Activated B cell treated with CpG ODN at 0.5 μM for 24 hours (primary cell): ENCODE measurements at regions of chr14 and their contacts with region 1.

Region 1: DNA sequence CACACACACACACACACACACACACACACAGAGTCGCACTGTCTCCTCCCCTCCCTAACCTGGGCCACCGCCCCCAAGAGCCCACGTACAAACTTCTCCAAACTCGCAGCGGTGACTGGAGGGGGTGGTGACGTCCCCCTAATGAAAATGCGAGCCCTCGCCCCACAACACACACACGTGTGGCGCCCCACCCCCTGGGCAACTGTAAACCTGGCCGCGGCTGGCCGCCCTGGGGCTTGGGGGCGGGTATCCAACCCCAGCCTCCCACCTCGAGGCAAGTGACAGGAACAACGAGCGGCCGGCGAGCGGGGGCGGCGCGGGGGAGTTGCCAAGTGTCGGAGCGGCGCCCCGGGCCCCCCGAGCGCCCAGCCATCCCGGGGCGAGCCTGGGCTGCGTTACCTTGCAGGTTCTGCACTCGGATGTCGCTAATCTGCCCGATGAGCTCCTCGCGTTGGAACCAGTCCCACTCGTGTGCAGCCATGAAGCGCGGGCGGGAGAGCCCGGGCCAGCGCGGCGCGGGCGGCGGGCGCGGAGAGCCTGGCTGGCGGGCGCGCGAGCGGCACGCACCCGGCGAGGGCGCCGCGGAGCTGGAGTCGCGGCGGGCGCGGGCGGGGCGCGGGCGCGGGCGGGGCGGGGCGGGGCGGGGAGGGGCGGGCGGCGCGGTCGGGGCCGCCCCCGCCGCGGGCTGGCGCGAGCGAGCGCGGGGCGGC is at the start of gene CLMN:
- DNase-seq: peak; percentile 58
- ATAC-seq: peak; percentile 72
- H3K4me3 Mint-ChIP-seq: peak within 1 kb of the TSS; percentile 87
- H3K27ac Mint-ChIP-seq: peak within 1 kb of the TSS; percentile 75
- H3K4me1 Mint-ChIP-seq: peaks cover 28% of the 10 kb centered on the region
- H3K27me3 Mint-ChIP-seq: no peaks in the 10 kb centered on the region
- CTCF ChIP-seq: no peak
- total RNA-seq, gene CLMN: 23.4 and 23.9 TPM in 2 replicates

Region 2: DNA sequence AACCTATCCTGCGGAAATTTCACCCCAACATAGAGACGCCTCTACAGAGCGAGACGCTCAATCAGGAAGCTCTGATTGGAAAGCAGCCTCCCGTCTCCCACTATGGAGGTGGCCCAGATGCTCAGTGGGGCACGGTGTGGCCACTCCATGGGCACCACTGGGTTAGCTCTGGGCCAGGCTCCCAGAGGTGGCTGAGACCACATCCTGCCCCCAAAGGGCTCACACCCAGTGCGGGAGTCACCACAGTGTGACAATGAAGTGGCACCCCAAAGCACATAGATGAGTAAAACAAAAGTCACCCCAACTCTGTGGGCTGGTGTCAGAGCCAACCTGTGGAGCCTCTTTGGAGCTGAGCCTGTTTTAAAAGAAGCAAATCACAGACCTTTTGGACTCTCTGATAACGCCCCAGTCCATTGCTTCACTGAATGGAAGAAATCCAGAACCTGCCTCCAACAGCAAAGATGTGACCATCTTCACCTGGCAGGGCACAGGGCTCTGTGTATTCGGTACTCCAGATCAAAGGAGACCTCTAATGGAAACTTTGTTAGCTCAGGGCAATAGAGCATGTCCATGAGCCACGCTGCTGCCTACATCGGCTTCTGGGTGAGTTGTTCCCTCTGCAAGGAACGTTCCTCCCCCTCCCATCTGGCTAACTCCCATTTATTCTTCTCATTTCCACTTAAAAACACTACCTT is 19.3 kb before region 1 on chr14:
- CTCF ChIA-PET with region 1: no interaction called
- POLR2A ChIA-PET with region 1: interaction called, 4 read pairs
- intact Hi-C with region 1: loop called (anchors 1 kb)
- DNase-seq: no peak
- ATAC-seq: peak; percentile 78
- H3K4me3 Mint-ChIP-seq: no peak overlapping the region
- H3K27ac Mint-ChIP-seq: no peak overlapping the region
- H3K4me1 Mint-ChIP-seq: peaks cover 73% of the 10 kb centered on the region
- H3K27me3 Mint-ChIP-seq: no peaks in the 10 kb centered on the region
- CTCF ChIP-seq: no peak

Region 3: DNA sequence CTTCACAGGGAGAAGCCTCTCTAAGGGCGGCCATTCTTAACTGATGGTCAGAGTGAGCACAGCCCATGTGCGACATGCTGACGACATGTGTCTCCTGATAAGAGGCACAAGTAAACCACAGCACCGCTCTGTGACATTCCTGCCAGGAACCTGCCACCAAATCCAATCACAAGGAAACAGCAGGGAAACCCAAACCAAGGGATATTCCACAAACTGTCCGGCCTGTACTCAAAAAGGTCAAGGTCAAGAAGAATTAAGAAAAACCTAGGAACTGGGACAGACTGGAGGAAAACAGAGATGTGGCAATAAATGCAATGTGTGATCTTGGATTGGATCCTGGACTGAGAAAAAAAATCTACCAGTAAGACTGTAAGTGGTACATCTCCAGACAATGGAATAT is 105.1 kb after region 1 on chr14:
- CTCF ChIA-PET with region 1: no interaction called
- POLR2A ChIA-PET with region 1: no interaction called
- intact Hi-C with region 1: loop called (anchors 10 kb)
- DNase-seq: no peak
- ATAC-seq: no peak
- H3K4me3 Mint-ChIP-seq: no peak overlapping the region
- H3K27ac Mint-ChIP-seq: no peak overlapping the region
- H3K4me1 Mint-ChIP-seq: peaks cover 3% of the 10 kb centered on the region
- H3K27me3 Mint-ChIP-seq: no peaks in the 10 kb centered on the region
- CTCF ChIP-seq: no peak

Region 4: GRCh38 chr14:95697764-95698163 is 378.3 kb after region 1 on chr14:
- CTCF ChIA-PET with region 1: no interaction called
- POLR2A ChIA-PET with region 1: no interaction called
- intact Hi-C with region 1: loop called (anchors 10 kb)
- DNase-seq: no peak
- ATAC-seq: peak; percentile 64
- H3K4me3 Mint-ChIP-seq: peak overlapping the region; percentile 74
- H3K27ac Mint-ChIP-seq: peak overlapping the region; percentile 94
- H3K4me1 Mint-ChIP-seq: peaks cover 96% of the 10 kb centered on the region
- H3K27me3 Mint-ChIP-seq: peaks cover 6% of the 10 kb centered on the region
- CTCF ChIP-seq: no peak